ENCODE measurements at regions of chr16 and their contacts with region 1.

Region 1: DNA sequence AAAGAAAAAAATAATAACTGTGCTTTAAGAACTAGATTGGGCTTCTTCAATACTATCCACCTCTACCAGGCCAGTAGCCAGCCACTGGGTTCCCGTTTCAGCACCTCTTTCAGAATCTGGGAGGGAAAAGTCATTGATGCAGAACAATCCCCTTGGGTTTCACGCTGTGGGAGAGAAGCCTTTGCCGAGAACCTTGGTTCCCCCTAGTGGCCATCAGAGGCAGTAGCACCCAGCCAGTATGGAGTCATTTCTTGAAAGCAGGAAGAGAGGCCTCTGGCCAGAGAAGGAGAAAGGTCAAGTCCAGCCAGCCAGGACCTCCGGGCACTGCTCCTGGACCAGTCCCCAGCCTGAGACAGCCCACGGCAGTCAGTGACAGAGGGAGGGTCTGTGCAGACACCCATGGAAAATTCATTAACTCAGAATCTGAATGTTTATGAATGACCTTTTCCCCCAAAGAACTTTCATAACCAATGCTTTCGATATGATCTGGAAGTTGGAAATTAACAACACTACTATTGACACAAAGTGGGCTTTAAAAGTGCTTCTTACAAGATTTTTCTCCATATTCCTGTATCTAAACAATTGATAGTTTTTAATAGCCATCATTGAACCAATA is 51.2 kb upstream of the CDH5 start:
- DNase-seq: peak; percentile 4 to 69 (median 40)
- ATAC-seq: peak; percentile 66
- H3K4me3 ChIP-seq: no peak overlapping the region
- H3K4me3 Mint-ChIP-seq: no peak overlapping the region
- H3K27ac ChIP-seq: no peak overlapping the region
- H3K27ac Mint-ChIP-seq: no peak overlapping the region
- H3K4me1 ChIP-seq: no peaks in the 10 kb centered on the region
- H3K4me1 Mint-ChIP-seq: no peaks in the 10 kb centered on the region
- H3K27me3 ChIP-seq: no peaks in the 10 kb centered on the region
- H3K27me3 Mint-ChIP-seq: peaks cover 12% of the 10 kb centered on the region
- CTCF ChIP-seq: peak; percentile 89

Region 2: DNA sequence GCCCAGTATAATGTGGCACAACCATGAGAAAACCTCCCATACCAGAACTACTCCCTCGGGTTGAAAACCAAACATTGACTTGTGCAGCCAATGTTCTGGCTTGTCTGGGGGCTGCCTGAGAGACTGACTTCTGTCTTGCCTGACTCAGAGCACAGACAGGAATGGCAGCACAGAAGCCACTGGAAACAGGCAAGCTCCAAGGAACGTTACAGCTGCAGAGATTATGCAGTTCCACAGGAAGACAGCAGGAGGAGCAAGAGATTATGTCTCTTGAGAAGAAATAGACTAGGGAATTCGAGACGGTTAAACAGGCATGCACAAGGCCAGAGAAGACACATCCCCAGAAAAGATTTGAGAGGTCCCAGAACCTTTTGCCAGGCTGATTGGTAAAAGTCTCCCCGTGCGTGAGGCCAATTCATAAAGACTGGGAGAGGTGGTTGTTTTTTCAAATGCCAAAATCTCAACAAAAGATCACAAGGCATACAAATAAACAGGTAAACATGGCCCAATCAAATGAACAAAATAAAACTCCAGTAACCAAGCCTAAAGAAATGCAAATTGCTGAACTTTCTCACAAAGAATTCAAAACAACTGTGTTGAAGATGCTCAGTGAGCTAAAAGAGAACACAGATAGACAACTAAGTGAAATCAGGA is 39.4 kb before region 1 on chr16:
- CTCF ChIA-PET with region 1: interaction called, 3 read pairs
- POLR2A ChIA-PET with region 1: no interaction called
- intact Hi-C with region 1: loop called in 1 of 2 experiments (anchors 2 kb)
- DNase-seq: peak in 2 of 9 experiments; percentile 28 to 43
- ATAC-seq: no peak
- H3K4me3 ChIP-seq: no peak overlapping the region
- H3K4me3 Mint-ChIP-seq: no peak overlapping the region
- H3K27ac ChIP-seq: no peak overlapping the region
- H3K27ac Mint-ChIP-seq: no peak overlapping the region
- H3K4me1 ChIP-seq: no peaks in the 10 kb centered on the region
- H3K4me1 Mint-ChIP-seq: peaks cover 2% of the 10 kb centered on the region
- H3K27me3 ChIP-seq: no peaks in the 10 kb centered on the region
- H3K27me3 Mint-ChIP-seq: peaks cover 25% of the 10 kb centered on the region
- CTCF ChIP-seq: no peak

Region 3: GRCh38 chr16:66326991-66327513 is 11.7 kb after region 1 on chr16:
- CTCF ChIA-PET with region 1: interaction called, 11 read pairs
- POLR2A ChIA-PET with region 1: no interaction called
- intact Hi-C with region 1: no loop called
- DNase-seq: no peak
- ATAC-seq: no peak
- H3K4me3 ChIP-seq: no peak overlapping the region
- H3K4me3 Mint-ChIP-seq: no peak overlapping the region
- H3K27ac ChIP-seq: no peak overlapping the region
- H3K27ac Mint-ChIP-seq: no peak overlapping the region
- H3K4me1 ChIP-seq: no peaks in the 10 kb centered on the region
- H3K4me1 Mint-ChIP-seq: no peaks in the 10 kb centered on the region
- H3K27me3 ChIP-seq: no peaks in the 10 kb centered on the region
- H3K27me3 Mint-ChIP-seq: peaks cover 22% of the 10 kb centered on the region
- CTCF ChIP-seq: no peak

Measured in CD8-positive, alpha-beta T cell (primary cell).